AG04449 (cell line): ENCODE measurements at regions of chr14 and their contacts with region 1.

Region 1: GRCh38 chr14:45267071-45267470 is 14.1 kb upstream of the MIS18BP1 start:
- DNase-seq: no peak
- H3K4me3 ChIP-seq: no peak overlapping the region
- CTCF ChIP-seq: no peak

Region 2: DNA sequence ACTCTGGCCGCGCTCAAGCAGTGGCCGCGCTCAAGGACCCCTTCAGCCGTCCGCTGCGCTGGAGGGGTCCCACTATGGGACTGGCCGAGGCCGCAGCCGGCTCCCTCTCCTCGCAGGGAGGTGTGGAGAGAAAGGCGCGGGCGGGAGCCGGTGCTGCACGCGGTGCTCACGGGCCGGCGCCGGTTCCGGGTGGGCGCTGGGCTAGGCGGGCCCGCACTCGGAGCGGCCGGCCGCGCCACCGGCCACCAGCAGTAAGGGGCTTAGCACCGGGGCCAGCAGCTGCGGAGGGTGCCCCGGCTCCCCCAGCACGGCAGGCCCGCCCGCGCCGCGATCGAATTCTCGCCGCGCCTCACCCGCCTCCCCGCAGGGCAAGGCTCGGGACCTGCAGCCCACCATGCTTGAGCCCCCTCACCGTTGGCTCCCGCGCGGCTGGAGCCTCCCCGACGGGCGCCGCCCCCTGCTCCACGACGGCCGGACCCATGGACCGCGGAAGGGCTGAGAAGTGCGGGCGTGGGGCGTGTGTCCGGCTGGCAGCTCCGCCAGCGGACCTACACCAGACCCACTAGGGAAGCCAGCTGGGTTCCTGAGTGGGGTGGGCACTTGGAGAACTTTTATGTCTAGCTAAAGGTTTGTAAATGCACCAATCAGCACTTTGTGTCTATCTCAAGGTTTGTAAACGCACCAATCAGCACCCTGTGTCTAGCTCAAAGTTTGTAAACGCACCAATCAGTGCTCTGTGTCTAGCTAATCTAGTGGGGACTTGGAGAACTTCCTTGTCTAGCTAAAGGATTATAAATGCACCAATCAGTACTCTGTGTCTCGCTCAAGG is 354.8 kb before region 1 on chr14:
- CTCF ChIA-PET with region 1: interaction called, 145 read pairs
- POLR2A ChIA-PET with region 1: no interaction called
- DNase-seq: no peak
- H3K4me3 ChIP-seq: peak overlapping the region; percentile 43
- CTCF ChIP-seq: no peak

Region 3: DNA sequence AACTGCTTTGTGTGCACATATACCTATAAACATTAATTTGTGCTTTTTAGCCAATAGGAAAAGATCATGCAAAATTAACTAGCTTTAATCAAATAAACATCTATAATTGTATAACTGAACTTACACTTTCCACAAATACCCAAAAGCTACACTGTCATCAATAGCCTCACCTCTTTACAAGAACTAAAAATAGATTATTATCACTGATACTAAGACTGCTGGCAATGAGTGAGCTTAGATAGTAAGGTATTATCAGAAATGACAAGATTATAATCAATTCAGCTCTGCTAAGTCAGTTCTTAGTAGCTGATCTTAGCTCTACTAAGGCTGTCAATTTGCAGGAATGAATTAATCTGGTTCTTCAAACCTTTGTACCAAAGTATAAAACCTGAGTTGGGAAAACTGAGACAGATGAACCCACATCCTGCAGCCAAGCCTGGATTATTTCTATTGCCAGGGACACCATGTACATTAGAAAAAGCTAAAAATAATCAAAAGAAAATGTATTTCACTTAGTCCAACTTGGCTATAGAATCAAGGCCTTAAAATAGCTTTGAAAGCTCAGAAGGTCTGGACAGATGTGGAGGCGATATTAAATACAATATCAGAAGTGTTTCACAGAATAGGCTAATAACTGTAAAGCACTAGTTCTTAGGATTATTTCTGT is 138.0 kb before region 1 on chr14:
- CTCF ChIA-PET with region 1: interaction called, 16 read pairs
- POLR2A ChIA-PET with region 1: no interaction called
- DNase-seq: no peak
- H3K4me3 ChIP-seq: no peak overlapping the region
- CTCF ChIP-seq: no peak

Region 4: DNA sequence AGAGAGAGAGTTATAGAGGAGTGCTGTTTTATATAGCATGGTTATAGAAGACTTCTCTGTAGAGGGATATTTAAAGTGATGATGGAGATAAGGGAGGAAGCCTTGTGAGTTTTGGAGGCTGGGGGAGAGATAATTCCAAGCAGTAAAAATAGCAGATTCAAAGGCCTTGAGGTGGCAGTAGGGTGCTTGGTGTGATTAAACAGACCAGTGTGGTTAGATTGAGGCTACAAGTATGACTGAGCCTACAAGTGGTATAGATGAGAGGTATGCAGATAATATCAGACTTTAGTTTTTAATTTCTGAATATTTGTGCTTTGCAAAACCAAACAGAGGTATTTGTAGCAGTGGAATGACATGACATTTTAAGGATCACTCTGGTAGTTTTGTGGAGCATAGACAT is 111.0 kb before region 1 on chr14:
- CTCF ChIA-PET with region 1: interaction called, 19 read pairs
- POLR2A ChIA-PET with region 1: no interaction called
- DNase-seq: no peak
- H3K4me3 ChIP-seq: no peak overlapping the region
- CTCF ChIP-seq: no peak

Region 5: GRCh38 chr14:45212231-45212630 is 54.8 kb before region 1 on chr14:
- CTCF ChIA-PET with region 1: no interaction called
- POLR2A ChIA-PET with region 1: no interaction called
- DNase-seq: no peak
- H3K4me3 ChIP-seq: no peak overlapping the region
- CTCF ChIP-seq: no peak

Region 6: GRCh38 chr14:45253068-45253753 is 13.9 kb before region 1 on chr14 and contains the start of gene MIS18BP1:
- CTCF ChIA-PET with region 1: interaction called, 32 read pairs
- POLR2A ChIA-PET with region 1: no interaction called
- DNase-seq: peak; percentile 76
- H3K4me3 ChIP-seq: peak within 1 kb of the TSS; percentile 86
- CTCF ChIP-seq: peak; percentile 65

Region 7: DNA sequence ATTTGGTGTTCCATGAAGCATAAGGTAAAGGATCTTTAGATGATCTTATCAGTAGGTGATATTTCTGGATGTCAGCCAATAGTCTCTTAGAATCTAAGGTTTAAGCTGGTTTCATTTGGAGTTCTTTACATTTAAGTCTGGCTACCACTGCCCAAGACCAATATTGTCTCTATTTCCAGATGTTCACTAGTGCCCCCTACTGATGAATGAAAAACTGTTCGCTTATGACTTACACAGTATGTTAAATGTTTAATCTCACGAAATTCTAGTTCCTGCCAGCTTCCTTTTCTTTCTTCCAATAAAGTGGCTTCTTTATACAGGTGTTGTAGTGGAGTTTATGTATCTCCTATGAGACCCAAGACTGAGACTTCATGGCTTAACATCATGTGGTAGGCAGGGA is 17.7 kb after region 1 on chr14:
- CTCF ChIA-PET with region 1: interaction called, 16 read pairs
- POLR2A ChIA-PET with region 1: no interaction called
- DNase-seq: no peak
- H3K4me3 ChIP-seq: no peak overlapping the region
- CTCF ChIP-seq: no peak